ENCODE measurements at regions of chr11 and their contacts with region 1.

Region 1: GRCh38 chr11:73307323-73308002 is 613 bp upstream of the ARHGEF17 start:
- DNase-seq: peak; percentile 97
- ATAC-seq: peak; percentile 81
- H3K4me3 Mint-ChIP-seq: peak overlapping the region; percentile 78
- H3K27ac Mint-ChIP-seq: no peak overlapping the region
- H3K4me1 Mint-ChIP-seq: peaks cover 6% of the 10 kb centered on the region
- H3K27me3 Mint-ChIP-seq: peaks cover 16% of the 10 kb centered on the region
- CTCF ChIP-seq: peak; percentile 62

Region 2: DNA sequence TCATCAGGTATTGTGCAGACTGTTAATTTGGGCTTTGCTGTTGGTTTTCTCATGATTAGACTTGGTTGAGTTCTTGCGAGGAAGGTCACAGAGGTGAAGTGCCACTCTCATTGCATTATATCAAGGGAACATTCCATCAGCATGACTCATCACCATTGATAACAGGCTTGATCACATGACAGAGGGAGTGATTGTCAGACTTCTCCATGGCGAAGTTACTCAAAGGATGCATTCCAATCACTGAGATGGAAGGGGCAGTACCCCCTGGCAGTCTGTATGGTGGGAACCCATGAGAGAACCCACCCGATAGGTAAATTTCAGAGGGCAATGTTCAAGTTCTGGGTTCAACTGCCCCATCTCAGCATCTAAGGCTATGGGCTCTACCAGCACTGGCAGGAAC is 108.8 kb before region 1 on chr11:
- CTCF ChIA-PET with region 1: no interaction called
- POLR2A ChIA-PET with region 1: no interaction called
- intact Hi-C with region 1: no loop called
- DNase-seq: no peak
- ATAC-seq: no peak
- H3K4me3 Mint-ChIP-seq: no peak overlapping the region
- H3K27ac Mint-ChIP-seq: no peak overlapping the region
- H3K4me1 Mint-ChIP-seq: no peaks in the 10 kb centered on the region
- H3K27me3 Mint-ChIP-seq: no peaks in the 10 kb centered on the region
- CTCF ChIP-seq: no peak

Region 3: GRCh38 chr11:73325036-73325981 is 17.8 kb after region 1 on chr11:
- CTCF ChIA-PET with region 1: interaction called, 24 read pairs
- POLR2A ChIA-PET with region 1: interaction called, 5 read pairs
- intact Hi-C with region 1: no loop called
- DNase-seq: no peak
- ATAC-seq: no peak
- H3K4me3 Mint-ChIP-seq: no peak overlapping the region
- H3K27ac Mint-ChIP-seq: no peak overlapping the region
- H3K4me1 Mint-ChIP-seq: peaks cover 12% of the 10 kb centered on the region
- H3K27me3 Mint-ChIP-seq: no peaks in the 10 kb centered on the region
- CTCF ChIP-seq: no peak

Region 4: GRCh38 chr11:73423506-73423905 is 116.0 kb after region 1 on chr11:
- CTCF ChIA-PET with region 1: no interaction called
- POLR2A ChIA-PET with region 1: no interaction called
- intact Hi-C with region 1: no loop called
- DNase-seq: no peak
- ATAC-seq: no peak
- H3K4me3 Mint-ChIP-seq: no peak overlapping the region
- H3K27ac Mint-ChIP-seq: no peak overlapping the region
- H3K4me1 Mint-ChIP-seq: peaks cover 8% of the 10 kb centered on the region
- H3K27me3 Mint-ChIP-seq: no peaks in the 10 kb centered on the region
- CTCF ChIP-seq: no peak

Measured in activated CD8-positive, alpha-beta T cell treated with anti-CD3 and anti-CD28 coated beads for 36 hours (primary cell).